Activated naive CD4-positive, alpha-beta T cell treated with anti-CD3 and anti-CD28 coated beads for 36 hours (primary cell): ENCODE measurements at regions of chr9 and their contacts with region 1.

Region 1: DNA sequence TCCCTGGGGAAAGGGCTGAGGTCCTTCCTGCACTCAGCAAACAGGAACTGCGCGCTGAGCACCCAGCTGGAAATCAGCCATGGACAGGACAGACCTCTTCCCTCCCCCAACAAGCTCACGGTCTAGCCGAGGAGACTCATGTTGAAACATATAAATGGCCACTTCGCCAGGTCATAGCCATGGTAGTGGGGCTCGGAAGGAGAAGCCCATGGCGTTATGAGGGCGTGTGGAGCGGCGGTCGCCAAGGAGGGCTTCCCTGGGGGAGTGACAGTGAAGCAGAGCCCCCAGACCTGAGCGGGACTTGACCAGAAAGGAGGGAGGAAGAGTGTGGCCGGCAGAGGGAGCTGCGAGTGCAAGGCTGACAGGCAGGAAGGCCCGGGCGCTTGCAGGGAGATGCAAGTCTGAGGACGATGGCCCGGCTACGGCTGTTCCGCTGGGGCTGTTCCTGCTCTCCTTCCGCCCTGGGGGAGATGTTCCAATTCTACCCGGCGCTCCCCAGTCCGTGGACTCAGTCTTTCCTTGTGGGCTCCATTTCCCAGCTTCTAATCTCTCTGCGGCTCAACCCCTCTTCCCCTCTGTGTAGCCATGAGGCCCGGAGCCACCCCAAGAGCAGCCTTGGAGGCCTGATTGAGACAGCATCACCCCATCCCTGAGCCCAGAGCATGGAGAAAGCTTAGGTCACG is 43.9 kb upstream of the PRRC2B start:
- DNase-seq: peak; percentile 95
- H3K4me3 Mint-ChIP-seq: peak overlapping the region; percentile 11
- H3K27ac Mint-ChIP-seq: peak overlapping the region; percentile 11
- H3K4me1 Mint-ChIP-seq: peaks cover 7% of the 10 kb centered on the region
- H3K27me3 Mint-ChIP-seq: no peaks in the 10 kb centered on the region

Region 2: DNA sequence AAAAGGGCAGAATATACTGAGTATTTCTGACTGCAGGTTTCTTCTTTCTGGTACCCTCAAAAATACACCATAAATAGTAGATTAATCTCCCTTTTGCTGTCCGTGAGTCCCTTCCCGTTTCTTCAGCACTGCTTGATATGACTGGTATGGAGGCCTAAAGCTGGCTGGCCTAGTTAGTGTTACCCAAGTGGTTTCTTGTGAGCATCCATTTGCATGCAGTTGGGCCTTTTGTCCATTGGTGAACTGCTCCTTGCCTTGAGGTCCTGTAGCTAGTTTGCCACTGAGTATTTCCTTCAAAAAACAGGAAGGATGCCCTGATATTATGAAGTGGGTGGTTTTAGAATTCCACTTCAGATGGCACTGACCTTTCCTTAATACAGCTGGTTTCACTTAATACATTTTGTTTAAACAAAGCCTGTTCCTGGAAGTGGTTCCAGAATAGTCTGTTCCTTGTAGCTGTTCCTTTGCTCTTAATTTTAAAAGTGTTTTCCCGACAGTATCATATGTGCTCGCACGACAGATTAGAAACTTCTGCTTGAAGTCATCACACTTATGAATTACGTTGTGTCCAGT is 555.0 kb before region 1 on chr9:
- CTCF ChIA-PET with region 1: no interaction called
- intact Hi-C with region 1: no loop called
- DNase-seq: no peak
- H3K4me3 Mint-ChIP-seq: no peak overlapping the region
- H3K27ac Mint-ChIP-seq: no peak overlapping the region
- H3K4me1 Mint-ChIP-seq: no peaks in the 10 kb centered on the region
- H3K27me3 Mint-ChIP-seq: no peaks in the 10 kb centered on the region

Region 3: GRCh38 chr9:131144201-131144600 is 205.8 kb before region 1 on chr9:
- CTCF ChIA-PET with region 1: no interaction called
- intact Hi-C with region 1: no loop called
- DNase-seq: no peak
- H3K4me3 Mint-ChIP-seq: no peak overlapping the region
- H3K27ac Mint-ChIP-seq: no peak overlapping the region
- H3K4me1 Mint-ChIP-seq: peaks cover 8% of the 10 kb centered on the region
- H3K27me3 Mint-ChIP-seq: no peaks in the 10 kb centered on the region

Region 4: GRCh38 chr9:131310833-131311554 is 39.0 kb before region 1 on chr9:
- CTCF ChIA-PET with region 1: no interaction called
- intact Hi-C with region 1: no loop called
- DNase-seq: peak; percentile 89
- H3K4me3 Mint-ChIP-seq: peak overlapping the region; percentile 39
- H3K27ac Mint-ChIP-seq: no peak overlapping the region
- H3K4me1 Mint-ChIP-seq: peaks cover 12% of the 10 kb centered on the region
- H3K27me3 Mint-ChIP-seq: no peaks in the 10 kb centered on the region

Region 5: GRCh38 chr9:131366761-131367401 is 16.9 kb after region 1 on chr9:
- CTCF ChIA-PET with region 1: interaction called, 13 read pairs
- intact Hi-C with region 1: no loop called
- DNase-seq: peak; percentile 25
- H3K4me3 Mint-ChIP-seq: no peak overlapping the region
- H3K27ac Mint-ChIP-seq: no peak overlapping the region
- H3K4me1 Mint-ChIP-seq: peaks cover 3% of the 10 kb centered on the region
- H3K27me3 Mint-ChIP-seq: no peaks in the 10 kb centered on the region

Region 6: DNA sequence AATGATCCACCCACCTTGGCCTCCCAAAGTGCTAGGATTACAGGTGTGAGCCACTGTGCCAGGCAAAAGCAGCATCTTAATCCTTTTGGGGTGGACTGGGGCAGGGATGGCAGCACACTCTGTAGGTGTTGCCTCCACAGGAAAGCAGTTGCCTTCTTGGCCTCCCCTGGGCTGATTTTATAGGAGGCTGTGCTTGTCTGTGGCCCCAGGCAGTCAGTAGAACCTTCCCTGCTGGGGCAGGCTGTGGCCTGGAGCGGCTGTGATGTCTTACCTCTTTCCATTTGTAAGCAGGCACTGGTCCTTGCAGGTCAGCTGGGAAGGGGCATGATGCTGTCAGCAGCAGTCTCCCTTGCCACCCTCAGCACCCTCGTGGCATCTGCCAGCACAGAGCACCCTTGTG is 93.6 kb after region 1 on chr9:
- CTCF ChIA-PET with region 1: no interaction called
- intact Hi-C with region 1: no loop called
- DNase-seq: no peak
- H3K4me3 Mint-ChIP-seq: no peak overlapping the region
- H3K27ac Mint-ChIP-seq: no peak overlapping the region
- H3K4me1 Mint-ChIP-seq: peaks cover 2% of the 10 kb centered on the region
- H3K27me3 Mint-ChIP-seq: no peaks in the 10 kb centered on the region

Region 7: DNA sequence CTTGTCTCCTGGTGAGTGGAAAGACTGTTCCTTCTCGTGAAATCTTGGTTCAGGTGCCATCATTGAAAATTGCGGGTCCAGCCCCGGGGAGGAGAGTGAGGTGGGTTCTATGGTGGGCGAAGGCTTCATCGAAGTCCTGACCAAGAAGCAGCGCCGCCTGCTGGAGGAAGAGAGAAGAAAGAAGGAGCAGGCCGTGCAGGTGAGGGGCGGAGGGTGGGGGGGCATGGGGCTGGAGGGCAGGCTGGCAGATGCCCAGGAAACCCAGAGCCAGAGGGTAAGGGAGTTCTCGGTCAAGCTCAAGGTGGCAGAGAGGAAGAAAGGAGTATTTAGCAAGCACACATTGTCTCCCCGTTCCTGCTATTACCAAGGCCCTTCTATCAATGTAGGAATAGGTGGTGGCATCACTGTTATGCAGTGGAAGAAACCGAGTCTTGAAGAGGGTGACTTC is 128.4 kb after region 1 on chr9:
- CTCF ChIA-PET with region 1: interaction called, 9 read pairs
- intact Hi-C with region 1: loop called (anchors 1 kb)
- DNase-seq: peak; percentile 66
- H3K4me3 Mint-ChIP-seq: no peak overlapping the region
- H3K27ac Mint-ChIP-seq: no peak overlapping the region
- H3K4me1 Mint-ChIP-seq: peaks cover 7% of the 10 kb centered on the region
- H3K27me3 Mint-ChIP-seq: no peaks in the 10 kb centered on the region

Region 8: GRCh38 chr9:131590908-131591844 is 241.2 kb after region 1 on chr9:
- CTCF ChIA-PET with region 1: interaction called, 7 read pairs
- intact Hi-C with region 1: loop called (anchors 10 kb)
- DNase-seq: peak; percentile 86
- H3K4me3 Mint-ChIP-seq: no peak overlapping the region
- H3K27ac Mint-ChIP-seq: peak overlapping the region; percentile 33
- H3K4me1 Mint-ChIP-seq: peaks cover 17% of the 10 kb centered on the region
- H3K27me3 Mint-ChIP-seq: no peaks in the 10 kb centered on the region